ENCODE measurements at regions of chr14 and their contacts with region 1.

Region 1: DNA sequence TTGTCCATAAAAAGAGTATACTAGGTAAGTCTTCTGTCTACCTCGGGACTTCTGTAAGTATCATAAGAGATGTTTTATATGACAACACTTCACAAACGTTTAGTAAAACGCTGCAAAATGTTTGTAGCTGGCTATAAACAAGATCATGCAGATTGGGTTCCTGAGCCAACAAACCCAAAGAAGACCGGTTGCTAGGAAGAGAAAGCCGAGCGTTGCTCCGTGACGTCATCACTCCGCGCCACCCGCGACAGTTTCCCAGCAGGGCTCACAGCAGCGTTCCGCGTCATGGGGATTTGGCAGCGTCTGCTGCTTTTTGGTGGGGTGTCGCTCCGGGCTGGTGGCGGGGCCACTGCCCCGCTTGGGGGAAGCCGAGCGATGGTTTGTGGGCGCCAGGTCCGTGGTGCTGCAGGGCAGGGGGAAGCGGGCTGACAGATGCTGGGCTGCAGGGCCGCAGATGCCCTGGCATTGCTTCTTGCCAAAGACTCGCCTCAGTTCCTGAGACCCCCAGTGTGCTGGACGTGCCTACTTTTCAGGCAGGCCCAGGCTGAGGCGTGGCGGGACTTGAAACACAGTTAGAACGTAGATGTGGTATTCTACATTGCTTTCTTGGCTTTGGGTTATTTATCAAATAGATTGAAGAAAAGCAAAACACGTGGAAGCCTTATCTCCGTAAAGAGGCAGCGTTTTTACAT is at the start of gene NUBPL:
- DNase-seq: peak; percentile 94 to 99 (median 97)
- ATAC-seq: peak; percentile 91
- H3K4me3 ChIP-seq: peak within 1 kb of the TSS; percentile 84
- H3K4me3 Mint-ChIP-seq: peak within 1 kb of the TSS; percentile 95
- H3K27ac ChIP-seq: peak within 1 kb of the TSS; percentile 80 to 84
- H3K27ac Mint-ChIP-seq: peak within 1 kb of the TSS; percentile 98
- H3K4me1 ChIP-seq: no peaks in the 10 kb centered on the region
- H3K4me1 Mint-ChIP-seq: peaks cover 34% of the 10 kb centered on the region
- H3K27me3 ChIP-seq: no peaks in the 10 kb centered on the region
- H3K27me3 Mint-ChIP-seq: peaks cover 26% of the 10 kb centered on the region
- CTCF ChIP-seq: no peak
- total RNA-seq, gene NUBPL: 7.2 to 8.2 TPM

Region 2: GRCh38 chr14:31420319-31421111 is 140.8 kb before region 1 on chr14 and contains the start of gene HEATR5A:
- CTCF ChIA-PET with region 1: no interaction called
- POLR2A ChIA-PET with region 1: interaction called, 7 read pairs
- intact Hi-C with region 1: loop called in 1 of 2 experiments (anchors 2 kb)
- DNase-seq: peak; percentile 83 to 96 (median 93)
- ATAC-seq: peak; percentile 96
- H3K4me3 ChIP-seq: peak within 1 kb of the TSS; percentile 99
- H3K4me3 Mint-ChIP-seq: peak within 1 kb of the TSS; percentile 99
- H3K27ac ChIP-seq: peak within 1 kb of the TSS in 1 of 2 donors; percentile 64
- H3K27ac Mint-ChIP-seq: peak within 1 kb of the TSS; percentile 89
- H3K4me1 ChIP-seq: peaks cover 4% of the 10 kb centered on the region
- H3K4me1 Mint-ChIP-seq: peaks cover 33% of the 10 kb centered on the region
- H3K27me3 ChIP-seq: no peaks in the 10 kb centered on the region
- H3K27me3 Mint-ChIP-seq: no peaks in the 10 kb centered on the region
- CTCF ChIP-seq: peak; percentile 29
- total RNA-seq, gene HEATR5A: 5.2 to 5.5 TPM

Region 3: DNA sequence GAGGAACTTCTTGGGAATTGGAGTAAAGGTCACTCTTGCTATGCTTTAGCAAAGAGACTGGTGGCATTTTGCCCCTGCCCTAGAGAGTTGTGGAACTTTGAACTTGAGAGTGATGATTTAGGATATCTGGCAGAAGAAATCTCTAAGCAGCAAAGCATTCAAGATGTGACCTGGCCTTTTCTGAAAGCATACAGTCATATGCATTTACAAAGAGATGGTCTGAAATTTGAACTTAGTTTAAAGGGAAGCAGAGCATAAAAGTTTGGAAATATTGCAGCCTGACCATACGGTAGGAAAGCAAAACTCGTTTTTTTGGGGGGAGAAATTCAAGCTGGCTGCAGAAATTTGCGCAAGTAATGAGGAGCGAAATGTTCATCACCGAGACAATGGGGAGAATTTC is 60.8 kb after region 1 on chr14:
- CTCF ChIA-PET with region 1: no interaction called
- POLR2A ChIA-PET with region 1: no interaction called
- intact Hi-C with region 1: no loop called
- DNase-seq: no peak
- ATAC-seq: no peak
- H3K4me3 ChIP-seq: no peak overlapping the region
- H3K4me3 Mint-ChIP-seq: no peak overlapping the region
- H3K27ac ChIP-seq: no peak overlapping the region
- H3K27ac Mint-ChIP-seq: no peak overlapping the region
- H3K4me1 ChIP-seq: no peaks in the 10 kb centered on the region
- H3K4me1 Mint-ChIP-seq: peaks cover 4% of the 10 kb centered on the region
- H3K27me3 ChIP-seq: no peaks in the 10 kb centered on the region
- H3K27me3 Mint-ChIP-seq: no peaks in the 10 kb centered on the region
- CTCF ChIP-seq: no peak

Measured in CD4-positive, alpha-beta T cell (primary cell).